ENCODE measurements at regions of chr19 and their contacts with region 1.

Region 1: DNA sequence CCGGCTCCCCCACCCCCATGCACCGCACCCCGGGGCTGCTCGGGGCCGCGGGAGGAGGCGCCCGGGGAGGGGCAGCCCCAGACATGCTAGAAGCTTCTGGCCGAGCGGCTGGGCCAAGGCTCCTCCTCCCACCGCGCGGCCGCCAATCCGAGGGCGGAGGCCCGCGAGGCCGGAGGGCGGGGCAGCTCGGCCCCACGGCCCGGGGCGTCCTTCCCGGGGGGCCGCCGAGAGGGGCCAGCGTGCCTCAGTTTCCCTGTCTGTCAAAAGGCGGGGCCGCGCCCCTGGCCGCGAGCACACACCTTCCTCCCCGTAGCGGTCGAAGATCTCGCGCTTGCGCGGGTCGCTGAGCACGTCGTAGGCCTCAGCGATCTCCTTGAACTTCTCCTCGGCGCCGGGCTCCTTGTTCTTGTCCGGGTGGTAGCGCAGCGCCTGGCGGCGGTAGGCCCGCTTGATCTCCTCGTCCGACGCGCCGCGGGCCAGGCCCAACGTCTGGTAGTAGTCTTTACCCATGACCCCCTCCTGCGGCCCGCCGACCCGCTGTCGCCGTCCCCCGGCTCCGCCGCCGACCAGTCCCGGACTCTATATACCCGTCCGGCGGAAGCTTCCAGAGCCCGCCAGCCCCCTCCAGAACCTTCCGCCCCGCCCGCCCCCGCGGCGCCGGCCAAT is at the start of gene DNAJB1:
- DNase-seq: peak; percentile 55 to 77 (median 70)
- H3K4me3 ChIP-seq: peak within 1 kb of the TSS; percentile 98
- H3K4me3 Mint-ChIP-seq: peak within 1 kb of the TSS; percentile 94 to 98 (median 96)
- H3K27ac ChIP-seq: peak within 1 kb of the TSS; percentile 98
- H3K27ac Mint-ChIP-seq: peak within 1 kb of the TSS; percentile 96 to 99 (median 97)
- H3K4me1 ChIP-seq: peaks cover 80% of the 10 kb centered on the region
- H3K4me1 Mint-ChIP-seq: peaks cover 71 to 73% (median 72%) of the 10 kb centered on the region in 3 donors
- H3K27me3 ChIP-seq: no peaks in the 10 kb centered on the region
- H3K27me3 Mint-ChIP-seq: peaks cover 0 to 13% of the 10 kb centered on the region in 2 donors
- total RNA-seq, gene DNAJB1: 98.6 to 103 TPM

Region 2: DNA sequence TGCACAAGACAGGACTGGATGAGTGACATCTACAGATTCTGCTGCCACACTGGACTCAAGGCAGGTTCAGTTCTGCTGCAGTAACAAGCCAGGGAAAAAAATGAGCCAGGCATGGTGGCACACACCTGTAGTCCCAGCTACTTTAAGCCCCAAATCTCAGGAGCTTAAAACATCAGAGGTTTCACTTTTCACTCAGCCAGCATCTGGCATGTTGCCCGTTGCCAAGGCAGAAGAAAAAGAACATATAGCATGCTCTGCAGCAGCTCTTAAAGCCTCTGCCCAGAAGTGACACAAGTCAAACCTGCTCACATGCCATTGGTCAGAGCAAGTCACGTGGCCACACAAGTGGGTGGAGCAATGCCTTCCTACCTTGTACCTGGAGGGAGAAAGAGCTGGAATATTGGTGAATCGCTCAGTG is 151.5 kb before region 1 on chr19:
- CTCF ChIA-PET with region 1: no interaction called
- POLR2A ChIA-PET with region 1: no interaction called
- DNase-seq: peak; percentile 76 to 96 (median 92)
- H3K4me3 ChIP-seq: peak overlapping the region; percentile 46
- H3K4me3 Mint-ChIP-seq: peak overlapping the region; percentile 47 to 80 (median 70)
- H3K27ac ChIP-seq: peak overlapping the region; percentile 68
- H3K27ac Mint-ChIP-seq: peak overlapping the region; percentile 85 to 100 (median 100)
- H3K4me1 ChIP-seq: peaks cover 88% of the 10 kb centered on the region
- H3K4me1 Mint-ChIP-seq: peaks cover 60 to 79% (median 73%) of the 10 kb centered on the region in 3 donors
- H3K27me3 ChIP-seq: no peaks in the 10 kb centered on the region
- H3K27me3 Mint-ChIP-seq: peaks cover 0 to 13% of the 10 kb centered on the region in 2 donors

Region 3: GRCh38 chr19:14496028-14496833 is 21.7 kb before region 1 on chr19 and contains the start of gene GIPC1:
- CTCF ChIA-PET with region 1: interaction called, 4 read pairs
- POLR2A ChIA-PET with region 1: interaction called, 17 read pairs
- DNase-seq: peak; percentile 74 to 89 (median 82)
- H3K4me3 ChIP-seq: peak within 1 kb of the TSS; percentile 71
- H3K4me3 Mint-ChIP-seq: peak within 1 kb of the TSS; percentile 75 to 93 (median 88)
- H3K27ac ChIP-seq: peak within 1 kb of the TSS; percentile 51
- H3K27ac Mint-ChIP-seq: peak within 1 kb of the TSS; percentile 67 to 94 (median 84)
- H3K4me1 ChIP-seq: peaks cover 24% of the 10 kb centered on the region
- H3K4me1 Mint-ChIP-seq: peaks cover 19 to 34% (median 33%) of the 10 kb centered on the region in 3 donors
- H3K27me3 ChIP-seq: no peaks in the 10 kb centered on the region
- H3K27me3 Mint-ChIP-seq: no peaks in the 10 kb centered on the region
- total RNA-seq, gene GIPC1: 32.7 to 36.7 TPM

Region 4: GRCh38 chr19:14529254-14530004 is 11.5 kb after region 1 on chr19 and contains the start of gene TECR:
- CTCF ChIA-PET with region 1: interaction called, 5 read pairs
- POLR2A ChIA-PET with region 1: interaction called, 44 read pairs
- DNase-seq: peak; percentile 99 to 100 (median 100)
- H3K4me3 ChIP-seq: peak within 1 kb of the TSS; percentile 97
- H3K4me3 Mint-ChIP-seq: peak within 1 kb of the TSS; percentile 85 to 99 (median 94)
- H3K27ac ChIP-seq: peak within 1 kb of the TSS; percentile 91
- H3K27ac Mint-ChIP-seq: peak within 1 kb of the TSS; percentile 94 to 100 (median 98)
- H3K4me1 ChIP-seq: peaks cover 40% of the 10 kb centered on the region
- H3K4me1 Mint-ChIP-seq: peaks cover 34 to 73% (median 47%) of the 10 kb centered on the region in 3 donors
- H3K27me3 ChIP-seq: no peaks in the 10 kb centered on the region
- H3K27me3 Mint-ChIP-seq: no peaks in the 10 kb centered on the region
- total RNA-seq, gene TECR: 114 to 123 TPM

Region 5: GRCh38 chr19:14556662-14557188 is 38.8 kb after region 1 on chr19:
- CTCF ChIA-PET with region 1: interaction called, 14 read pairs
- POLR2A ChIA-PET with region 1: interaction called, 10 read pairs
- DNase-seq: peak; percentile 61 to 70 (median 62)
- H3K4me3 ChIP-seq: peak overlapping the region; percentile 35
- H3K4me3 Mint-ChIP-seq: peak overlapping the region; percentile 8 to 82 (median 72)
- H3K27ac ChIP-seq: no peak overlapping the region
- H3K27ac Mint-ChIP-seq: peak overlapping the region in 7 of 8 donors; percentile 68 to 97 (median 92)
- H3K4me1 ChIP-seq: peaks cover 48% of the 10 kb centered on the region
- H3K4me1 Mint-ChIP-seq: peaks cover 31 to 68% (median 44%) of the 10 kb centered on the region in 3 donors
- H3K27me3 ChIP-seq: no peaks in the 10 kb centered on the region
- H3K27me3 Mint-ChIP-seq: no peaks in the 10 kb centered on the region

Region 6: GRCh38 chr19:14577885-14578427 is 60.0 kb after region 1 on chr19:
- CTCF ChIA-PET with region 1: interaction called, 3 read pairs
- POLR2A ChIA-PET with region 1: interaction called, 11 read pairs
- DNase-seq: no peak
- H3K4me3 ChIP-seq: no peak overlapping the region
- H3K4me3 Mint-ChIP-seq: no peak overlapping the region
- H3K27ac ChIP-seq: no peak overlapping the region
- H3K27ac Mint-ChIP-seq: peak overlapping the region in 1 of 8 donors; percentile 48
- H3K4me1 ChIP-seq: peaks cover 5% of the 10 kb centered on the region
- H3K4me1 Mint-ChIP-seq: peaks cover 6 to 7% (median 6%) of the 10 kb centered on the region in 3 donors
- H3K27me3 ChIP-seq: no peaks in the 10 kb centered on the region
- H3K27me3 Mint-ChIP-seq: no peaks in the 10 kb centered on the region

Measured in CD8-positive, alpha-beta memory T cell (primary cell).